ENCODE measurements at regions of chr12 and their contacts with region 1.

Region 1: GRCh38 chr12:89514751-89515150 is 9.8 kb downstream of the GALNT4 start:
- DNase-seq: no peak
- H3K4me3 Mint-ChIP-seq: no peak overlapping the region
- H3K27ac Mint-ChIP-seq: no peak overlapping the region
- H3K4me1 Mint-ChIP-seq: peaks cover 27% of the 10 kb centered on the region
- H3K27me3 Mint-ChIP-seq: no peaks in the 10 kb centered on the region
- CTCF ChIP-seq: no peak

Region 2: DNA sequence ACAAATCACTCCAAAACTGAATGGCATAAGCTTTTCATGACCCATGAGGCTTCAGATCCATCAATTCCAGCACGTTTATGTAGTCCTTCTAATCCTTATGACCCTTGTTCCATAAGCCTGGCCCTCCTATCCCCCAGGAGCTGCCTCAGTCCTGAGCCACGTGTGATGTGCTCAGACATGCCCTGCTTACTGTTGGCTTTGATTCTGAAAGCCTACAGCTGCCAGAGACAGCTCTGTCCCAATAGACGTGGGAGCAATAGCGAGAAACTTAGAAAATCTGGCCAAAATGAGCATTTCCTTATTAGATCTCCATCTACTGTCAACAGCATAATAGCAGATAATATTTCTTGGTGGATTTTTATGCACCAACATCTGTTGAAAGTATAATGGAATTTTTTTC is 195.6 kb before region 1 on chr12:
- CTCF ChIA-PET with region 1: no interaction called
- intact Hi-C with region 1: no loop called
- DNase-seq: no peak
- H3K4me3 Mint-ChIP-seq: no peak overlapping the region
- H3K27ac Mint-ChIP-seq: no peak overlapping the region
- H3K4me1 Mint-ChIP-seq: peaks cover 4% of the 10 kb centered on the region
- H3K27me3 Mint-ChIP-seq: no peaks in the 10 kb centered on the region
- CTCF ChIP-seq: no peak

Region 3: GRCh38 chr12:89493670-89494302 is 21.0 kb before region 1 on chr12:
- CTCF ChIA-PET with region 1: interaction called, 11 read pairs
- intact Hi-C with region 1: no loop called
- DNase-seq: no peak
- H3K4me3 Mint-ChIP-seq: no peak overlapping the region
- H3K27ac Mint-ChIP-seq: peak overlapping the region; percentile 73
- H3K4me1 Mint-ChIP-seq: peaks cover 57% of the 10 kb centered on the region
- H3K27me3 Mint-ChIP-seq: no peaks in the 10 kb centered on the region
- CTCF ChIP-seq: no peak